Posterior cingulate gyrus (tissue), 11 donors: ENCODE measurements at regions of chr12 and their contacts with region 1.

Region 1: DNA sequence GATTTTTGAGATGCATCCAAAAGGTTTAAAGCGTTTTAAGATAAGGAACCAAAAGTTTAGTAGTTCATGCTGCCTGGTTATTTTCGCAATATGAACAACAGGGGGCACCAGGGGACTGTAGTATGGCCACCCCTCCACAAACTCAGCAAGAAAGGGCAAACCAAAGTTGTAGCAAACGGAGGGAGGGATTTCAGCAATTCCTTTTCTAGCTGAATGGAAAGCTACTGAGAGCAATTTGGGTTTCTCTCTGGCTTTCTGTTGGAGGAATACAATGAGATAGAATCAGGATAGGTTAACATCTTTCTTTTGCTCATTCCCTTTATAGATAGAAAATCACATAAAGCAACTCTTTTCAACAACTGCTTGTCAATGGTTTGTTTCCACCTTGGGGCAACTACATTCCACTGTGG is 62.5 kb downstream of the DRAM1 start:
- DNase-seq: peak in 5 of 10 donors; percentile 32 to 82 (median 41)

Region 2: GRCh38 chr12:101799774-101800173 is 140.1 kb before region 1 on chr12:
- intact Hi-C with region 1: no loop called
- DNase-seq: no peak

Region 3: DNA sequence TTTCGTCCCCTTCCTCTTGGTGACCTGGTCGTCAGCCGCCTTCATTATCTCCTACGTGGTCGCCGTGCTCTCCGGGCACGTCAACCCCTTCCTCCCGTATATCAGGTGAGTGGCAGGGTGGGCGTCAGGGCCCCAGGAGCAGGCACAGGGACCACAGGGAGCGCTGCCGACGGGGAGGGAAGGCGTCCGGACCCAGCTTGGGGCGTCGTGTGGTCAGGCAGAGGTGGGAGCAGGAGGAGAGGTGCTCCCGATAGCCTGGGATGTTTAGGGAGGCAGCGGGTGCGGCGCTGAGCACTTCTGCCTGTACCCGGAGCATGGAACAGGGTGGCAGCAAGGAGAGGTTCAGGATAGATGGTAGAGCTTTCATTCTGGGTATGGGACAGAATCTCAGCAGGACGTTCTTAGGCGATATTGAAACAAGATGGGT is 62.0 kb before region 1 on chr12:
- intact Hi-C with region 1: no loop called
- DNase-seq: no peak

Region 4: DNA sequence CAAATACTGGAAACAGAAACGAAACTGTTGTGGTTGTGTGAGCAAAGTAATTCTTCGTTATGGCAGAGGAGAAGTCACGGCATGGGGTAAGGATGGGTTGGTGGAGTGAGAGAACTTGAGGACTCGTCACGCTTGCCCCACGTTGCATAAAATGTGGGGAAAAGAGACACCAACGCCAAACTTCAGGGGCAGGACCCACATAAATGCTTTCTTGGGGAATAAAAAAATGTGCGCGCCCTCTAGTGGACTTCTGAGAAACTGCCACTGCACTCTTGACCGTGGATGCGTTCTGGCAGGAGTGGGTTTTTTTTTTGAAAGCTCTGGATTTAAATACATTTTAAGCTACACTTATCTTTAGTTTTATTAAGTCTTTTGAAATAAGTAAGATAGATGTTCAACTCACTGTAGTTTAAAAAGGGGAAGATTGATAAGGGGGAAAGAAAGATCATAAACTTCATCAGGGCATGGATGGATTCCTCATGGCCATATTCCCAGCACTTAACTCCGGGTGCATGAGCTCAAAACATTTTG is 544.6 kb after region 1 on chr12:
- intact Hi-C with region 1: loop called (anchors 5 kb)
- DNase-seq: peak in 8 of 10 donors; percentile 12 to 80 (median 61)

Region 5: GRCh38 chr12:102633981-102634605 is 694.2 kb after region 1 on chr12:
- intact Hi-C with region 1: no loop called
- DNase-seq: no peak

Region 6: GRCh38 chr12:102769319-102769916 is 829.6 kb after region 1 on chr12:
- intact Hi-C with region 1: loop called (anchors 10 kb)
- DNase-seq: peak in 9 of 10 donors; percentile 17 to 93 (median 59)

Region 7: DNA sequence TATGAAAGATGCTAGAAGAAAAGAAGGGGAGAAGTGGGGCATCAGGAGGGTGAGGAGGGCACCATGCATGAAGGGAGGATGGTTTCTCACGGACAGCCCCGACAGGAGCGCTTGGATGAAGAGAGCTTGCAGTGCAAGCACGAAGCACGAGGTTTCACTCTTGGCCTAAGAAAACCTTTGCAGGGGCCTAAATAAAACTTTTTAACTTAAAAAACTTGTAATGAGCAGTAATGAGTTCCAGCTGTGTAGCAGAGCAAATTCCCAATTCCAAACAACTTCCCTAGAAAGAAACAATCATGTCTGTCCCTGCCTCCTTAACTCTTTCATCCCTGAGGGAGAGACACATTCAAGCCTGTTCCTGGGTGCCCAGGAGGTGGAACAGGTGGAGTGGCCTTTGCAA is 857.7 kb after region 1 on chr12:
- intact Hi-C with region 1: no loop called
- DNase-seq: no peak

Region 8: DNA sequence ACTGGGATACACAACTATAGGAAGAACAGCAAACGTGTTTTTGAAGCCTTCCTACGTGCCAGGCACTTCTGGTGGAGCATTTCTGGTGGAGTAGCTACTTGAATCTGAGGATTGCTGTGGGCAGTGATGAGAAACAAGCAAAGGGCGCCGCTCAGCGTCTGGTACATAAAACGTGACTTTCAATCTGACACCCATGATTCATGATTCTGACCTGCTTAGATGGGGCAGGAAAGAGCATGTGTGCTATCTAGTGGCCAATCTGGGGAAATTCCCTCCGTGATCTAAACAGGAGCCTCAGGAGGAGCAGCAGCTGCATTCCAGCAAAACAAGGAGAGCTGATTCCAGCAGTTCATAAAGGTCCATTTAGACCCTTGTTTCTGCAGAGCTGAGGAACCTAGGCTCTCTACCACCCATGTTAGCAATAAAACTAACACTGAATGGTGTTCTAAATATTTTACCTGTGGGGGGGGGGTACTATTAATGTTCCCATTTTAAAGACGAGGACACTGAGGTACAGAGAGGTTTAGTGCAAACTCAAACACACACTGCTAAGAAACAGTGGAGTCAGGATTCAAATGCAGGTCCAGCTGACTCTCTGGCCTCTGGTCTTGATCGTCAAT is 939.4 kb after region 1 on chr12:
- intact Hi-C with region 1: loop called (anchors 5 kb)
- DNase-seq: peak; percentile 38 to 92 (median 60)